ENCODE measurements at regions of chr11 and their contacts with region 1.

Region 1: DNA sequence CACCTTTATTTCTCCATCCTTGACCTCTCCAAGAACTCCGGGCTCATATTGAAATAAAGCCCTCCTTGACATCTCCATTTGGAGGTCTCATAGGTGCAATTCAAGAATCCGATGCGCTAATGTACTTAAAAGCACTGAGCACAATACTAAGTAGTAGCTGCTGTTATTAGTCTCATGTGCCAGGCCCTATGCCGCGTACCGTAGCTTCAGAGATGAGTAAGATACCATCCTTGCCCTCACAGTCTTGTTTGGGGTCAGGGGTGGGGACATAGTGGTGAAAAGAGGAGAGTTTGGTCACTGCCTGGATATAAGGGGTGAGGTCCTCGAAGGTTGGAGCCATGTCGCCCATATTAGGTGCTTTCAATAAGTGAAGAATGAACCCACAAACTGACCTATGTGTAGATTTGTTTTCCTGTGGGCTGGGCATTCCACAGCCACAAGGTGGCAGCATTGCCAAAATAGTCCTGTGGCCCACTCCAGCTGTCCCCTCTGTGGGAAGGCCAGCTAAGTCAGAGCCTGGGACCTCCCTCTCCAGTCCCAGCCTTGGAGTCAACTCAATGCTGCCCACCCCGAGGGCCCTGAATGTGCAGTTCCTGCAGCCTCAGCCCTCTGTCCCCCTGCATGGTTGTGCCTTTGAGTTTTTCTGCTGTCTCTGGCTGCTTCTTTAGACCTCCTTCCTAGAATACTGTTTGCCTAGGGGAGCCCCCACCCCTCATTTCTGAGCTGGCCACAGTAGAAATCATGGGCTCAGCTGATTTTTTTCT is 6.5 kb downstream of the DCPS start:
- DNase-seq: peak; percentile 67 to 81 (median 72)
- ATAC-seq: peak; percentile 72
- H3K4me3 ChIP-seq: no peak overlapping the region
- H3K27ac ChIP-seq: no peak overlapping the region
- H3K4me1 ChIP-seq: peaks cover 10% of the 10 kb centered on the region
- H3K27me3 ChIP-seq: no peaks in the 10 kb centered on the region
- CTCF ChIP-seq: peak; percentile 69 to 84 (median 82)
- POLR2A ChIP-seq: no peak

Region 2: DNA sequence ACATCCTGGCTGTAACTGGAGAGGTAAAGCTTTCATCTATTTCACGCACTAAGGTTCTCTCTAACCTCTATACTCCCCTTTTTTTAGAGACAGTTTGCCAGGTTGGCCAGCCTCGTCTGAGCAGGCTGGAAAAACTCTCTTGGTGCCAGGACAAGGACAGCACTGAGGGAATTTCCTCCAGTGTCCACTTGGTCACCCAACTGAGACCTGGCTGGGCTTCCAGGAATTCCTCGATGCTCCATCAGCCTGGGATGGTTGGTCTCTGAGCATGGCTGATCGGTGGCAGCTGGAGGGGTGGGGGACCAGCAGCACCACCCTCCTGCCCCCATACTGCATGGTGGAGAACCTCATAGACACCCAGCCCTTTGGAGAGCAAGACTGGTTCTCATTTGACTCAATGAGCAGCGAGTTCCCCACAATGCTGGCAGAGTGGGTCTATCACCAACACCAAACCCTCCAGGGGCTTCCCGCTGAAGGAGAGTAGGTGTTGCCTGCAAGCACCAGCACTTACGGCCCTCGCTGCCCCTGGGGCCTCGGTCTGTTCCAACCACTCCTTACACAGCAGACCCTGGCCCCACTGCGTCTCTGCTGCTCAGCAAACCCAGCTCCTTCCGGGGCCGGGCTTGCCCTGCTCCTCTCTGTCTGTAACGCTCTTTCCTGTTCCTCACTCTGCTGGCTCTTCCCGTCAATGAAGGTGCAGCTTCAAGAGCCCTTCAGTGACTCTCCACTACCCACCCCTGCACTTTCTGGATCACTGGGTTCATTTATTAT is 167.3 kb after region 1 on chr11:
- intact Hi-C with region 1: loop called (anchors 5 kb)
- DNase-seq: no peak
- ATAC-seq: no peak
- H3K4me3 ChIP-seq: no peak overlapping the region
- H3K27ac ChIP-seq: no peak overlapping the region
- H3K4me1 ChIP-seq: peaks cover 19% of the 10 kb centered on the region
- H3K27me3 ChIP-seq: no peaks in the 10 kb centered on the region
- CTCF ChIP-seq: no peak
- POLR2A ChIP-seq: no peak